Aorta (tissue), 5 donors: ENCODE measurements at regions of chr5 and their contacts with region 1.

Region 1: GRCh38 chr5:151771259-151772028 is at the start of gene G3BP1:
- DNase-seq: peak; percentile 100
- ATAC-seq: peak; percentile 97
- H3K4me3 ChIP-seq: peak within 1 kb of the TSS; percentile 48 to 59
- H3K27ac ChIP-seq: peak within 1 kb of the TSS; percentile 94 to 96
- H3K4me1 ChIP-seq: no peaks in the 10 kb centered on the region
- H3K27me3 ChIP-seq: no peaks in the 10 kb centered on the region
- total RNA-seq, gene G3BP1: 120 to 140 TPM

Region 2: DNA sequence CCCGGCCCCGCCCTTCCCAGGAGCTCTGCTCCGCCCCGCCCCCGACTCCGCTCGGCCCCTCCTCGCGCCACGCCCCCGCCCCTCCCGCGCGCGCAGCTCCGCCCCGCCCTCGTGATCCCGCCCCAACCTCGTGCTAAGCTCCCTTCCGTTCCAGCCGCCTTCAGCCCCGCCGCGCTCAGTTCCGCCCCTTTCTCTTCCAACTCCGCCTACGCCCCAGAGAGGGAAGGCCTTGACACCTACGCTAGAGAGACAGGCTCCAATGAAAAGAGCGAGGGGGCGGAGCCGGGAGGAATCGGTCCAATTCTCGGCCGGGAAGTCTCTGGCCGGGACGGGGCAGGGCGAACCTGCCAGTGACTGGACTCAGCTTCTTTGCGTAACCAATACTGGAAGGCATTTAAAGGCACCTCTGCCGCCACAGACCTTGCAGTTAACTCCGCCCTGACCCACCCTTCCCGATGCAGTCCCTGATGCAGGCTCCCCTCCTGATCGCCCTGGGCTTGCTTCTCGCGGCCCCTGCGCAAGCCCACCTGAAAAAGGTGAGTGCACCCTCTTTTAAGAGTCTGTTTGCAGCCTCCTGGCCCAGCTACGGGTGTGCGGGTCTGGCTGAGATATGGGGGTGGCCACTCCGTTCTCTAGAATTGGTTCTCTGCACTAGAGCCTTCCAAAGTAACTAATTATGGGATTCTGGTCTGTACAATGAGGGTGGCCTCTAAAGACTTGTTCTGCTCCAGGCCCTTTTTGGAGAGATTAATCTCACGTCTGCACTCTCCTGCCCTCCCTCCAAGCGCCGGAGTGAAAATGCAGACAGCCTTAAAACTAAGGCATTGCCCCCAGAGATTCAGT is 518.5 kb before region 1 on chr5 and contains the start of gene GM2A:
- intact Hi-C with region 1: loop called in 1 of 2 experiments (anchors 10 kb)
- DNase-seq: peak; percentile 99 to 100
- ATAC-seq: peak; percentile 97
- H3K4me3 ChIP-seq: peak within 1 kb of the TSS; percentile 76 to 92
- H3K27ac ChIP-seq: peak within 1 kb of the TSS in 1 of 2 donors; percentile 50
- H3K4me1 ChIP-seq: peaks cover 0 to 4% of the 10 kb centered on the region in 2 donors
- H3K27me3 ChIP-seq: no peaks in the 10 kb centered on the region
- total RNA-seq, gene GM2A: 25.0 to 32.7 TPM

Region 3: DNA sequence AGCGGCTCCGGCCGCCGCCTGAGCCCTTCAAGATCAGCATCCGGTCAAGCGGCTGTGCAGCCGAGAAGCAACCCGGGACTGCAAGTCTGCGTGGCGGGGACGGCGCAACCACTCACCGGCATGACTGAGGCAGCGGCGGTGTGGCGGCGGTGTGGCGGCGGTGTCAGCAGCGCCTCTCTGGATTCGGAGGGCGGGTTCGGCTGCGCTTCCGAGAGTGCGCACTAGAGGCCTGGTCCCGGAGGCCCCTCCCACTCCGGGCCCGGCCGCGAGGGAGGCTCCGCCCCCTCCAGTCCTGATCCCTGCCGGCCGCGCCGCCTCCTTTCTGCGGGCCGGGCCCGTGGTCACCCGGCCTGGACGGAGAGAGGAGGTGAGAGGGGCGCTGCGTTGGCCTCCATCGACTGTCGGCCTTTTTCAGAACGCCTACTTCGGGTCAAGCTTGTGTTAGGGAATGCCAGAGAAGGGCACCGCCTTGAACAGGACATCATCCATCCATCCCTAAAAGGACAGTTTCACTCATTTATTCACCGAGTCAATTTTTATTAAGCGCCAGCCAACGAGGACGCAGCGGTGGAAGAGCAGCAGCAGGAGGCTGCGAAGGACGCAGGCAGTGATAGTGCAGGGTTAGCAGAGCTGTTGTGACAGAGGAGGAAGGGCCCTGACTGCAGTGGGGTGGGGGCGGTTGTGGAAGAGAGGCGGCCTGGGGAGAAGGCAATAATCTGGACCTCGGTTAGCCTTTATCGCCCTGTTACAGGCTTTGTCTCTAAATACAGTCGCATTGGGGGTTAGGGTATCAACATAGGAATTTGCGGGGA is 12.8 kb before region 1 on chr5 and contains the start of gene ATOX1:
- intact Hi-C with region 1: loop called (anchors 1 kb)
- DNase-seq: peak; percentile 95 to 97
- ATAC-seq: peak; percentile 100
- H3K4me3 ChIP-seq: peak within 1 kb of the TSS; percentile 84 to 86
- H3K27ac ChIP-seq: peak within 1 kb of the TSS; percentile 31 to 82
- H3K4me1 ChIP-seq: no peaks in the 10 kb centered on the region
- H3K27me3 ChIP-seq: no peaks in the 10 kb centered on the region
- total RNA-seq, gene ATOX1: 61.7 to 64.7 TPM

Region 4: DNA sequence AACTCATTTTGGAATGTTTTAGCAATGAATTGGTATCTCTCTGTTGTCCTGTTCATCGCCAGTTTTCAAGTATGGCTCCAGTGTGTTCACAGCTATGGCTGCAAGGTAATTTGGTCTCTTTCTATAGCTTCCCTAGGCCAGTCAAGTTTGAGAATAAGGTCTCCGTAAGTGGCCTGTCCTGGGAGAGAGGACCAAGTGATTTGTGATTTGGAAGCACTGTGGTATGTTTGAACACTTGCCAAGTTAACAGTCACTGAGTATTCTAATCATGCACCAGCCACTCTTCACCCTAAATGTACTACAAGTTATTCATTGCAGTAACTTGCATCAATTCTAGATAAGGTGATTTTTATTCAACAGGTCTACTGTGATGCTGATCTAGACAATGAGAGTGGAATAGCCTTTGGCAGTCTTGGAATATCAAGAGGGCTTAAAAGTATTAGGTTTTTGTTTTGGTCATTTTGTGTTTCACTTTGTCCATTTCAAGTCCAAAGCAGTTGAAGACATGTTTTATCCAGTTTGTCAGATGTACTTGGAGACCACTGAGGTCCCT is 41.4 kb after region 1 on chr5:
- intact Hi-C with region 1: no loop called
- DNase-seq: no peak
- ATAC-seq: no peak
- H3K4me3 ChIP-seq: no peak overlapping the region
- H3K27ac ChIP-seq: no peak overlapping the region
- H3K4me1 ChIP-seq: peaks cover 0 to 10% of the 10 kb centered on the region in 2 donors
- H3K27me3 ChIP-seq: no peaks in the 10 kb centered on the region